HepG2 (cell line): ENCODE measurements at regions of chr5 and their contacts with region 1.

Region 1: DNA sequence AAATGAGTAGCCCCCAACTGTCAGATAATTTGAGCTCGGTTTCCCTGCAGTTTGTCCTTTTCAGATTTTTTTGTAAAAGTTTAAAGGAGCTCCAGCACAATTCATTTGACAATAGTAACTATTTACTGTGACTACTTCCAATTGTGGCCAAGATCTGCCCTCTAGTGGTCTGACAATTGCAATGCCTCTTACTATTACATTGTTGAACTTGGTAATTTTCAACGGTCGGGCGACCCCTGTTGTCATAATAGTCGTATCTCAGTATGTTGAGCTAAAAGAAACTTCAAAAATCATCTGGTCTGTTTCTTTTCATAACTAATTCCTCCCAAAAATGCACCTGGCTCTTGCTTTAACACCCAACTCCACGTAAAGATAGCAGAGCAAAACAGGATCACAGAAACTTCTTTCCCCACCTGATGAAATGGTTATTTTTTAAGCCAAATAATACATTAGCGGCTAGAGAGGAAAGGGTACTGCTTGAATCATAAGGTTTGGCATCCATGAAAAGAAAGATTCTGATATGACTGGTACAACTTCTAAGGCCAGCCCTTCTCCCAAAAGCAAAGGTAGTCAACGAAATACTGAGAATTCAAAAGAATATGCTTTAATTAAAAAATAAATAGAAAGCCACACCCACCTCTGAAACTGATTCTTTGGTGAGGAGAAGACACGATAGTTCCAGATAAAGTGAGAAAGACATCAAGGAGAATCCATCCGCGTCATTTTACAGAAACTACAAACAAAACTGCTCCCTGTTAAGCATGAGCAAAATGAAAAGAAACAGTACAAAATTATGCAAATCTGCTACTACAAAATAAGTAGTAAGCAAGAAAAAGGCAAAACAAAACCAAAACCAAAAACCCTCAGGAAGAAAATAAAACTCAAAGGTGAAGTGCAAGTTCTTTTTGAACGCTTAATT is 76.9 kb upstream of the HTR4 start:
- DNase-seq: peak; percentile 79
- ATAC-seq: peak; percentile 96
- H3K4me3 ChIP-seq: no peak overlapping the region
- H3K27ac ChIP-seq: no peak overlapping the region
- H3K4me1 ChIP-seq: 0 out of 2 replicates have a peak, but pooled peaks cover 4% of the 10 kb centered on the region
- H3K27me3 ChIP-seq: no peaks in the 10 kb centered on the region
- CTCF ChIP-seq: peak; percentile 86
- EP300 ChIP-seq: no peak
- POLR2A ChIP-seq: no peak
- RAD21 ChIP-seq: peak; percentile 42; the same call in 1 of the 2 replicates

Region 2: DNA sequence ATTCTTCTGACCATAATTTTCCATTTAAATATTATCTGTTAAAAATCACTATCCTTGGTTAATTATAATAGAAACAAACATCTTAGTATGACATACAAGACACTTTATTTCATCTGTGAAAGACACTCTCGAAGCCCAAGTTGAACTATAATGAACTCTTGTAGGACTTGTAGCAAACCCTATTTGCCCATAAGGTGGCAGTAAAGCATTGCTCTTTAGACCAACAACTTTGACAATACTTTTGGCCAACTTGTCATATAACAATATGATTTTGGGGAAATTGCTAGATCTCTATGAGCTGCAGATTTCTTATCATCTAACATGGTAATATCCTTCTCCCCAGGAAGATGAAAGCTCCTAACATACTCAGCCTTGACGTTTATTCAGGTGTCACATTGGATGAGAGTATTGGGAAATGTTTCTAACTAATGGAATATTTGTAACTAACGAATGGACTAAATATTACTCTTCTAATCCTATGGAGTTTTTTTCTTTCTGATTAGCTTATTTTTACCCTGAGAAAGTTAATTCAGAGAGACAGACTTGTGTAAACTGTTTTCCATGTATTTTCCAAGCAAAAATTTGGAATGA is 551.9 kb before region 1 on chr5:
- CTCF ChIA-PET with region 1: interaction called, 30 read pairs
- POLR2A ChIA-PET with region 1: no interaction called
- in situ Hi-C with region 1: loop called (anchors 10 kb)
- intact Hi-C with region 1: loop called (anchors 1 kb)
- DNase-seq: peak; percentile 64
- ATAC-seq: peak; percentile 64
- H3K4me3 ChIP-seq: no peak overlapping the region
- H3K27ac ChIP-seq: no peak overlapping the region
- H3K4me1 ChIP-seq: no peaks in the 10 kb centered on the region
- H3K27me3 ChIP-seq: no peaks in the 10 kb centered on the region
- CTCF ChIP-seq: peak; percentile 76
- EP300 ChIP-seq: no peak
- POLR2A ChIP-seq: no peak
- RAD21 ChIP-seq: peak; percentile 68

Region 3: GRCh38 chr5:148290271-148291195 is 440.7 kb before region 1 on chr5:
- CTCF ChIA-PET with region 1: interaction called, 6 read pairs
- POLR2A ChIA-PET with region 1: no interaction called
- in situ Hi-C with region 1: no loop called
- intact Hi-C with region 1: loop called (anchors 2 kb)
- DNase-seq: peak; percentile 21
- ATAC-seq: peak; percentile 74
- H3K4me3 ChIP-seq: no peak overlapping the region
- H3K27ac ChIP-seq: no peak overlapping the region
- H3K4me1 ChIP-seq: no peaks in the 10 kb centered on the region
- H3K27me3 ChIP-seq: no peaks in the 10 kb centered on the region
- CTCF ChIP-seq: peak; percentile 58
- EP300 ChIP-seq: no peak
- POLR2A ChIP-seq: no peak
- RAD21 ChIP-seq: 0 out of 2 replicates have a peak, but pooled peaks have one; percentile 17

Region 4: GRCh38 chr5:148957591-148958202 is 226.5 kb after region 1 on chr5:
- CTCF ChIA-PET with region 1: interaction called, 5 read pairs
- POLR2A ChIA-PET with region 1: no interaction called
- in situ Hi-C with region 1: no loop called
- intact Hi-C with region 1: loop called (anchors 2 kb)
- DNase-seq: peak; percentile 14
- ATAC-seq: peak; percentile 82
- H3K4me3 ChIP-seq: no peak overlapping the region
- H3K27ac ChIP-seq: no peak overlapping the region
- H3K4me1 ChIP-seq: no peaks in the 10 kb centered on the region
- H3K27me3 ChIP-seq: 0 out of 5 replicates have a peak, but pooled peaks cover 0 to 5% of the 10 kb centered on the region in 2 experiments
- CTCF ChIP-seq: peak; percentile 72
- EP300 ChIP-seq: no peak
- POLR2A ChIP-seq: no peak
- RAD21 ChIP-seq: no peak

Region 5: DNA sequence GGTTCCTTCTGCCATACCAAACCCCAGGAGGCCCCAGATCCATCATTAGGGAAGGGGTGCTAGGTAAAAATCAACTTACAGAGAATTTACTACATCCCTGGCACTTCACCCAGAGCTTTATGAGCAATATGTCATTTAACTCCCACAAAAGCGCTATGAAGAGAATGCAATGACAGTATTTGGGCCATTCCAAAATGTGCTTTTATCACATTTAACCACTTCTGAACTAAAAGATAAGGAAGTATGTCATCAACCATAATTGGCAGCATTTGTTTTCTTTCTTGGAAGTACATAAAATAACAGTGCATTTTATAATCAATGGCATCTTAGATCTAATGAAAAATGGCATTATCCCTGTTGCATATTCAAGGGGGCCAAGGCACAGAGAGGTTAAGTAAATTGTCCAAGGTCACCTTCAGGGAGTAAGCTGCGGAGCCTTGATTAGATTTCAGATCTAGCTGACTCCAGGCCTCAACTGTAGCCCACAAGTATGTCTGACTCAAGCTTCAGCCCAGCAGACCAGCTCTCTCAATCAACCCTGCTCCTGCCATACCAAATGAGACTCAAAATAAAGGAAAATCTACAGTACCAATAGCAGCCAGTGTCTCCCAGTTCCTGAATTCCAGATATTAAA is 315.1 kb after region 1 on chr5:
- CTCF ChIA-PET with region 1: no interaction called
- POLR2A ChIA-PET with region 1: no interaction called
- in situ Hi-C with region 1: no loop called
- intact Hi-C with region 1: no loop called
- DNase-seq: no peak
- ATAC-seq: no peak
- H3K4me3 ChIP-seq: no peak overlapping the region
- H3K27ac ChIP-seq: no peak overlapping the region
- H3K4me1 ChIP-seq: peaks cover 21% of the 10 kb centered on the region
- H3K27me3 ChIP-seq: no peaks in the 10 kb centered on the region
- CTCF ChIP-seq: no peak
- EP300 ChIP-seq: no peak
- POLR2A ChIP-seq: no peak
- RAD21 ChIP-seq: no peak

Region 6: GRCh38 chr5:149114403-149115312 is 383.5 kb after region 1 on chr5:
- CTCF ChIA-PET with region 1: interaction called, 13 read pairs
- POLR2A ChIA-PET with region 1: no interaction called
- in situ Hi-C with region 1: loop called (anchors 5 kb)
- intact Hi-C with region 1: loop called (anchors 1 kb)
- DNase-seq: peak; percentile 66
- ATAC-seq: peak; percentile 98
- H3K4me3 ChIP-seq: no peak overlapping the region
- H3K27ac ChIP-seq: no peak overlapping the region
- H3K4me1 ChIP-seq: no peaks in the 10 kb centered on the region
- H3K27me3 ChIP-seq: no peaks in the 10 kb centered on the region; a peak in 1 of 5 replicates
- CTCF ChIP-seq: peak; percentile 88
- EP300 ChIP-seq: no peak
- POLR2A ChIP-seq: no peak
- RAD21 ChIP-seq: peak; percentile 60; the same call in 1 of the 2 replicates